ENCODE measurements at regions of chr2 and their contacts with region 1.

Region 1: DNA sequence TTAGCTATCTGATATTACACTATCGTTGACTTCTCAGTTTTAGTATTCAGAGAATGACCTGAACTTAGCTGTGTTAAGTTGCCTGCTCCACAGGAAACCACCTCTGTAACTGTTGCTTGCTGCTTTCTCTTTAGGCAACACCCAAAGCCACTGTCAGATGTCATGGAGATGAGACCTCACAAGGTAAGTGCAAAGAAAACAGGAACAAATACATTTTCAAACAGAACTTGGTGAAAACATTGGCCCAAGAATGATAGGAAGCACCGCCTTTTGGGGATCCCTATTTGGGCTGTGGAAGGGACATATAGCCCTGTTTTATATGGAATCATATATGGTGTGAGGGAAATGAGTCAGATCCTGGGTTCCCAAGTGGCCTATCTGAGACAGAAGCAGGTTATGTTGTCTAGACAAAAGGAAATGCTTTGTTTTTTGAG is 143.4 kb downstream of the UBE2E3 start:
- DNase-seq: peak; percentile 78
- ATAC-seq: peak; percentile 91
- H3K4me3 Mint-ChIP-seq: peak overlapping the region; percentile 61
- H3K27ac Mint-ChIP-seq: peak overlapping the region; percentile 91
- H3K4me1 Mint-ChIP-seq: peaks cover 53% of the 10 kb centered on the region
- H3K27me3 Mint-ChIP-seq: no peaks in the 10 kb centered on the region
- CTCF ChIP-seq: no peak

Region 2: DNA sequence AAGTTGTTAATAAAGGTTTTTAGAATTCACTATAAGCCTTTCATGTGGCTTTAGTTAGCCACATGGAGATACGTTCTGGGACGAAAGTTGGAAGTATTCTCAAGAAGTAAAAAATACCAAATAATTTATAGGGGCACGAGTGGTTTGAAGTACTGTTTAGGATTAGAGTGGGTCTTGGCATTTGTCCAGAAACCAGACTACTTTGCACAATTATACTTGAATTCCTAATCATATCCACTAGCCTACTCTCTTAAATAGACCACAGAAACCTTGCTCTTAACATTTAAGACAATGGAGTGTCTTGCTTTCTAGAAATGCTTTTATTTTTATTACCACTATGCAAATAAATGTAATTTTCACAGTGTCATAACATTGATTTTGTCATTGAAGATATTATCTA is 98.8 kb before region 1 on chr2:
- CTCF ChIA-PET with region 1: no interaction called
- POLR2A ChIA-PET with region 1: no interaction called
- intact Hi-C with region 1: no loop called
- DNase-seq: no peak
- ATAC-seq: no peak
- H3K4me3 Mint-ChIP-seq: no peak overlapping the region
- H3K27ac Mint-ChIP-seq: no peak overlapping the region
- H3K4me1 Mint-ChIP-seq: peaks cover 8% of the 10 kb centered on the region
- H3K27me3 Mint-ChIP-seq: no peaks in the 10 kb centered on the region
- CTCF ChIP-seq: no peak

Region 3: GRCh38 chr2:181223234-181223633 is 99.4 kb after region 1 on chr2:
- CTCF ChIA-PET with region 1: no interaction called
- POLR2A ChIA-PET with region 1: no interaction called
- intact Hi-C with region 1: no loop called
- DNase-seq: no peak
- ATAC-seq: peak; percentile 50
- H3K4me3 Mint-ChIP-seq: peak overlapping the region; percentile 46
- H3K27ac Mint-ChIP-seq: peak overlapping the region; percentile 91
- H3K4me1 Mint-ChIP-seq: peaks cover 38% of the 10 kb centered on the region
- H3K27me3 Mint-ChIP-seq: no peaks in the 10 kb centered on the region
- CTCF ChIP-seq: no peak

Region 4: GRCh38 chr2:181312515-181312927 is 188.7 kb after region 1 on chr2:
- CTCF ChIA-PET with region 1: interaction called, 5 read pairs
- POLR2A ChIA-PET with region 1: no interaction called
- intact Hi-C with region 1: loop called (anchors 5 kb)
- DNase-seq: peak; percentile 78
- ATAC-seq: peak; percentile 77
- H3K4me3 Mint-ChIP-seq: peak overlapping the region; percentile 83
- H3K27ac Mint-ChIP-seq: peak overlapping the region; percentile 100
- H3K4me1 Mint-ChIP-seq: peaks cover 52% of the 10 kb centered on the region
- H3K27me3 Mint-ChIP-seq: no peaks in the 10 kb centered on the region
- CTCF ChIP-seq: no peak